SK-N-SH (cell line): ENCODE measurements at regions of chr17 and their contacts with region 1.

Region 1: DNA sequence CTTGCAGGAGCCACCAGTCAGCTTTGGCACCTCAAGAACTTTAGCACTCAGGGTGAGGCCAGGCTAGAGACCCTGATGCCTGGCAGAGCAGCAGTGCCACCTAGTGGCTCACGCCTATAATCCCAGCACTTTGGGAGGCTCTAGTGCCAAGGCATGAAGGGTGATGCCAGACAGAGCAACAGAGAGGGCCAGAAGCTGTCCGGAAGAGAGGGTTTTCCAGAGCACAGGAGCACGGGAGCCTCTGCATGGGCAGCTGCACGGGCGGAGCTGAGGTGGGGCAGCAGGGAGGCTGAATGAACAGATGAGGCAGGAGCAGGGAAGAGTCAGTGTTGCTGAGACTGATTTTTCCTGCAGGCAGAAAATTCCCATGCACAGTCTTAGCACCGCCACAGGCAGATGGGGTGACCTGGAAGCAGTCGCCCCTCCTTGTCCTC is 38.9 kb downstream of the MYH3 start:
- DNase-seq: peak; percentile 75
- H3K4me3 ChIP-seq: peak overlapping the region in 1 of 2 experiments; percentile 44; a peak in 2 of 4 replicates
- H3K27ac ChIP-seq: no peak overlapping the region
- H3K4me1 ChIP-seq: peaks cover 2 to 11% of the 10 kb centered on the region in 2 experiments; a peak in 3 of 4 replicates
- H3K27me3 ChIP-seq: no peaks in the 10 kb centered on the region
- CTCF ChIP-seq: peak; percentile 95
- EP300 ChIP-seq: no peak
- RAD21 ChIP-seq: peak; percentile 68

Region 2: GRCh38 chr17:9924735-9925191 is 693.5 kb before region 1 on chr17:
- CTCF ChIA-PET with region 1: interaction called, 67 read pairs
- POLR2A ChIA-PET with region 1: no interaction called
- DNase-seq: peak; percentile 61
- H3K4me3 ChIP-seq: peak overlapping the region in 1 of 2 experiments; percentile 31; a peak in 1 of 4 replicates
- H3K27ac ChIP-seq: no peak overlapping the region
- H3K4me1 ChIP-seq: no peaks in the 10 kb centered on the region
- H3K27me3 ChIP-seq: peaks cover 16% of the 10 kb centered on the region; the same call in 1 of the 2 replicates
- CTCF ChIP-seq: peak; percentile 82
- EP300 ChIP-seq: no peak
- RAD21 ChIP-seq: peak; percentile 87

Region 3: DNA sequence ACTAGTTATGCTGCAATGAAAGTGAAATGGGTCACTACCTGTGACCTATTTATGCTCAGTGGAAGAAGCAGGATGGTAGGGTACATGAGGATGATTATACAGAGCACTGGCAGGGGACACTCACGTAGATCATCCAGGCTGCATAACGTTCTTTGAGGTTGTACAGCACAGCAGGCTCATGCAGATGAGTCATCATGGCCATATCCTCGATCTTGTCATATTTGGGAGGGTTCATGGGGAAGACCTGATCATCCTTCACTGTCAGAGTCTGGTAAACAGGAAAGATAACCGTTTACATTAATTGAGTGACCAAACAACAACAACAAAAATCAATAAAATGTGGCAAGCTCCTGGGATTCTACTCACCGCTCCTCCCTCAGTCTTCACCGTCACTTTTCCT is 70.9 kb before region 1 on chr17:
- CTCF ChIA-PET with region 1: no interaction called
- POLR2A ChIA-PET with region 1: no interaction called
- DNase-seq: no peak
- H3K4me3 ChIP-seq: no peak overlapping the region; a peak in 1 of 4 replicates
- H3K27ac ChIP-seq: no peak overlapping the region
- H3K4me1 ChIP-seq: no peaks in the 10 kb centered on the region
- H3K27me3 ChIP-seq: 0 out of 2 replicates have a peak, but pooled peaks cover 6% of the 10 kb centered on the region
- CTCF ChIP-seq: no peak
- EP300 ChIP-seq: no peak
- RAD21 ChIP-seq: no peak

Region 4: DNA sequence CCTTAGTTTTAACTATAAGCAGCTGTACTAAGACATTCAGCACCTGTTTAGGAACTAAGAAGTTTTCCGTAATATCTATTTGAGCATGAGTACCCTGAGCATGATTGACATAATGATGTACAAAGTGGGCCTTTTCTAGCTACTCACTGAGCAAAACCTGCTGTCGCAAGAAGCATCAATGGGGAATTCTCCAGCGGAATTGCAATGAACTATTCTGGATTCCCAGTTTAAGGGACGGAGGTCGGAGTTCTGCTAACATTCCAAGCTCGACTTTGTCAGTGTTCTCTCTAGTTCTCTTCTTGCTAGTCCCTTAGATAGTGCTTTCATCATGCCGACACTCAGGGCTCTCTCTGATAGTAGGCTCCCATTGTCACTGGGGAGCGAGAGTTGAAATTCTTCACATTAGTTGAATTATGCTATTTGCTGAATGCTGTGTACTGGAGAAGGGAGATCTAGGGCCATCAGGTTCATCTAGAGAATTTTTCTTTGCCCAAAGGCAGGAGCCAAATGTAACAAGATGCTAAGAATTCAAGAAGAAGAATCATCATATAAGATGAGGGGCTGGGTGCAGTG is 28.6 kb before region 1 on chr17:
- CTCF ChIA-PET with region 1: interaction called, 20 read pairs
- POLR2A ChIA-PET with region 1: no interaction called
- DNase-seq: no peak
- H3K4me3 ChIP-seq: no peak overlapping the region
- H3K27ac ChIP-seq: no peak overlapping the region
- H3K4me1 ChIP-seq: no peaks in the 10 kb centered on the region
- H3K27me3 ChIP-seq: peaks cover 38% of the 10 kb centered on the region; the same call in 1 of the 2 replicates
- CTCF ChIP-seq: no peak
- EP300 ChIP-seq: no peak
- RAD21 ChIP-seq: no peak

Region 5: DNA sequence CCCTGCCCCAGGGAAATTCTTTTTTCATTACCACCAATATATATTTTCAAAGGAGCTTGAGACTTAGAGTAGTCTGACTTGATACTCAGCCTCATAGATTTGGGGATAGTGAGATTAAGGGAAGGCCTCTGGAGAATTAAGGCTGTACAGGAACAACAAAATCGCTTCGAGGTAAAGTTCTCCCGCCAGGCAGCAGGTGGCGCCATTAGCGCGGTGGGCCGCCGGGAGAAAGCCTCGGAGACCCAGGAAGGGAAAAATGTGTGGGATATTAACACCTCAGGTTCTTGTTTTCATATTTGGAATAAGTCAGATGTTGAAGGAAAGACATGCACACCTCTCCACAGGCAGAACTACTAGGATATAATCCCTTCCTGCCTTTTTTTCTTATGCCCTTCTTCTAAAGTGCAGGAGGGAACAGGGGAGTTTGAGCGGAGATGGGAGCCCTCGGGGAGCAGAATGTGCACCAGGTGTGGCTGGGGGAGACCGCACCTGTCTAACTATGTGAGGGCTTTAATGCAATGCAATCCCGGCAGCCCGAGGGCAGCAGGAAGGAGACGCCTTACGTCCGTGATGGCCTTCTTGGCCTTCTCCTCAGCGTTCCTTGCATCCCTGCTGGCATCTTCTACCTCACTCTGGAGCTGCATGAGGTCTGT is 13.0 kb after region 1 on chr17:
- CTCF ChIA-PET with region 1: interaction called, 155 read pairs
- POLR2A ChIA-PET with region 1: no interaction called
- DNase-seq: peak; percentile 66
- H3K4me3 ChIP-seq: no peak overlapping the region; a peak in 1 of 4 replicates
- H3K27ac ChIP-seq: no peak overlapping the region
- H3K4me1 ChIP-seq: no peaks in the 10 kb centered on the region
- H3K27me3 ChIP-seq: no peaks in the 10 kb centered on the region; the same call in 1 of the 2 replicates
- CTCF ChIP-seq: peak; percentile 84
- EP300 ChIP-seq: no peak
- RAD21 ChIP-seq: peak; percentile 56

Region 6: DNA sequence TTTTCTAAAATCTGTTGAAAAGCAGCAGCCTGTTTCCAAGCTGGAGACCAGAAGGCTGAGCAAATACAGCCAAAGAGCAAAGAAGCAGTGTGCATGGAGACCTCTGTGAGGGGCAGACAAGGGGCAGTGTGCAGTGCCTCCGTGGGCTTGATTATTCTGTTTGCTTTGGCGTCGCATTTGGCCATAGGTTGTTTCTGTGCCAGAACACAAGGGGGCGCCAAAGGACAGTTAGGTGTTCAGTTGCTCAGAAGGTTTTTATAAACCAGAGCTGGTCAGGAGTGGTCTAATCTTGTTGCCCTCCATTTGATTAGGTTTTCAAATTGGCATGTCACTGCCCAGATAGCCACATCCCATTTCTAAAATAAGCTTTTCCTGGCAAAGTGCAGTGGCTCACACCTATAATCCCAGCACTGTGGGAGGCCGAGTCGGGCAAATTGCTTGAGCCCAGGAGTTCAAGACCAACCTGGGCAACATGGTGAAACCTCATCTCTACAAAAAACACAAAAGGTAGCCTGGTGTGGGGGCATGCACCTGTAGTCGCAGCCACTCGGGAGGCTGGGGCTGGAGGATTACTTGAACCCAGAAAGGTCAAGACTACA is 28.3 kb after region 1 on chr17:
- CTCF ChIA-PET with region 1: interaction called, 38 read pairs
- POLR2A ChIA-PET with region 1: no interaction called
- DNase-seq: peak; percentile 71
- H3K4me3 ChIP-seq: peak overlapping the region in 1 of 2 experiments; percentile 21; a peak in 1 of 4 replicates
- H3K27ac ChIP-seq: no peak overlapping the region
- H3K4me1 ChIP-seq: no peaks in the 10 kb centered on the region
- H3K27me3 ChIP-seq: no peaks in the 10 kb centered on the region
- CTCF ChIP-seq: peak; percentile 86
- EP300 ChIP-seq: no peak
- RAD21 ChIP-seq: peak; percentile 84

Region 7: GRCh38 chr17:10713318-10713717 is 95.1 kb after region 1 on chr17:
- CTCF ChIA-PET with region 1: no interaction called
- POLR2A ChIA-PET with region 1: no interaction called
- DNase-seq: no peak
- H3K4me3 ChIP-seq: no peak overlapping the region
- H3K27ac ChIP-seq: no peak overlapping the region
- H3K4me1 ChIP-seq: no peaks in the 10 kb centered on the region
- H3K27me3 ChIP-seq: no peaks in the 10 kb centered on the region
- CTCF ChIP-seq: no peak
- EP300 ChIP-seq: no peak
- RAD21 ChIP-seq: no peak